T-cell (primary cell): ENCODE measurements at regions of chr11 and their contacts with region 1.

Region 1: GRCh38 chr11:47447906-47448305 is 1.0 kb downstream of the RAPSN start:
- DNase-seq: no peak
- ATAC-seq: no peak
- H3K4me3 ChIP-seq: no peak overlapping the region
- H3K4me3 Mint-ChIP-seq: no peak overlapping the region
- H3K27ac ChIP-seq: no peak overlapping the region
- H3K27ac Mint-ChIP-seq: no peak overlapping the region
- H3K4me1 ChIP-seq: peaks cover 0 to 3% of the 10 kb centered on the region in 2 experiments
- H3K4me1 Mint-ChIP-seq: no peaks in the 10 kb centered on the region
- H3K27me3 ChIP-seq: no peaks in the 10 kb centered on the region
- H3K27me3 Mint-ChIP-seq: no peaks in the 10 kb centered on the region

Region 2: DNA sequence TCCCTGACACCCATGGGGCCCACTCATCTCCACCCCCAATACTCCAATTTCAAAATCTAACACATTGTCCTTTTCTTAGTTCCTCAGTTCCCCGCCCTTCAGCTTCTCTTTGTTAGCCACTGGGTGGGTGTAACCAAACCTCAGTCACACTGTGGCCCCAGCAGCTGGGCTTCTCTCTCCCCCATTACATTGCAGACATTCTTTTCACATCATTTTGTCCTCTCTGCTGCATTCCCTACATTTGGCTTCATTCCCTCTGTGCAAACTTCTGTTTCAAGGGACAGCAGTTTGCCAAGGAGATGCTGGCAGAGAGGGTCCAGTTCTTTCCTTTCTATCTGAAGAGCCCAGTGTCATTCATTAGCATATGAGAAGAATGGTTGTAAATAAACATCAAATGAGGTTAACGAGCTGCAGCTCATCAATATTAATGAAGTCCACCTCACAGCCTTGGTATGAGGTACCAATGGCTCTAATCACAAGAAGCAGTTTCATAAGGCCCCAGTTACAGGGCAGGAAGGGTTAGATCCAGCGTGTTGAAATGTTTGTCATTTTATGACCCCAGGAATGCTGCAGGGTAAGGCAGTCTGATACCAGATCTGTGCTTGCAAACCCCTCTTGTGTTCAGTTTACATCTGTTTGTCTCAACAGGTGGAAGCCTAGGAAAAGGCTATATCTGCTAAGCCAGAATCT is 343.5 kb before region 1 on chr11:
- CTCF ChIA-PET with region 1: no interaction called
- POLR2A ChIA-PET with region 1: no interaction called
- DNase-seq: no peak
- ATAC-seq: no peak
- H3K4me3 ChIP-seq: no peak overlapping the region
- H3K4me3 Mint-ChIP-seq: no peak overlapping the region
- H3K27ac ChIP-seq: no peak overlapping the region
- H3K27ac Mint-ChIP-seq: no peak overlapping the region
- H3K4me1 ChIP-seq: peaks cover 0 to 2% of the 10 kb centered on the region in 2 experiments
- H3K4me1 Mint-ChIP-seq: no peaks in the 10 kb centered on the region
- H3K27me3 ChIP-seq: no peaks in the 10 kb centered on the region
- H3K27me3 Mint-ChIP-seq: no peaks in the 10 kb centered on the region

Region 3: DNA sequence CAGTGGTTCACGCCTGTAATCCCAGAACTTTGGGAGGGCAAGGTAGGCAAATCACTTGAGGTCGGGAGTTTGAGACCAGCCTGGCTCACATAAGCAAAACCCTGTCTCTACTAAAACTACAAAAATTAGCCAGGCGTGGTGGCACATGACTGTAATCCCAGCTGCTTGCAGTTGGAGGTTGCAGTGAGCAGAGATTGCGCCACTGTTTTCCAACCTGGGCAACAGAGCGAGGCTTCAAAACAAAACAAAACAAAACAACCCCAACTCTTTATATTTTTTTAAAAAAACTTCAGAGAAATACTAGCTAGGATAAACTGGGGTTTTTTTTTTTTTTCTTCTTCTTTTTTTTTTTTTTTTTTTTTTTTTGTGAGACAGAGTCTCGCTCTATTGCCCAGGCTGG is 32.9 kb after region 1 on chr11:
- CTCF ChIA-PET with region 1: interaction called in 1 of 2 experiments, 11 read pairs
- POLR2A ChIA-PET with region 1: no interaction called
- DNase-seq: no peak
- ATAC-seq: no peak
- H3K4me3 ChIP-seq: no peak overlapping the region
- H3K4me3 Mint-ChIP-seq: no peak overlapping the region
- H3K27ac ChIP-seq: no peak overlapping the region
- H3K27ac Mint-ChIP-seq: no peak overlapping the region
- H3K4me1 ChIP-seq: no peaks in the 10 kb centered on the region
- H3K4me1 Mint-ChIP-seq: no peaks in the 10 kb centered on the region
- H3K27me3 ChIP-seq: no peaks in the 10 kb centered on the region
- H3K27me3 Mint-ChIP-seq: no peaks in the 10 kb centered on the region